CD8-positive, alpha-beta T cell (primary cell): ENCODE measurements at regions of chr7 and their contacts with region 1.

Region 1: GRCh38 chr7:155298834-155299534 is 1.3 kb downstream of the INSIG1 start:
- DNase-seq: peak; percentile 92 to 99 (median 96)
- ATAC-seq: peak; percentile 70
- H3K4me3 ChIP-seq: peak overlapping the region; percentile 57 to 67
- H3K4me3 Mint-ChIP-seq: peak overlapping the region; percentile 90
- H3K27ac ChIP-seq: peak overlapping the region; percentile 79 to 90
- H3K27ac Mint-ChIP-seq: peak overlapping the region; percentile 98
- H3K4me1 ChIP-seq: peaks cover 34% of the 10 kb centered on the region
- H3K4me1 Mint-ChIP-seq: peaks cover 42% of the 10 kb centered on the region
- H3K27me3 ChIP-seq: no peaks in the 10 kb centered on the region
- H3K27me3 Mint-ChIP-seq: no peaks in the 10 kb centered on the region
- CTCF ChIP-seq: no peak

Region 2: GRCh38 chr7:155190688-155191087 is 108.3 kb before region 1 on chr7:
- CTCF ChIA-PET with region 1: interaction called, 8 read pairs
- POLR2A ChIA-PET with region 1: no interaction called
- intact Hi-C with region 1: loop called (anchors 1 to 5 kb)
- DNase-seq: peak in 8 of 9 experiments; percentile 38 to 79 (median 62)
- ATAC-seq: peak; percentile 90
- H3K4me3 ChIP-seq: no peak overlapping the region
- H3K4me3 Mint-ChIP-seq: peak overlapping the region; percentile 22
- H3K27ac ChIP-seq: no peak overlapping the region
- H3K27ac Mint-ChIP-seq: no peak overlapping the region
- H3K4me1 ChIP-seq: peaks cover 2% of the 10 kb centered on the region
- H3K4me1 Mint-ChIP-seq: peaks cover 3% of the 10 kb centered on the region
- H3K27me3 ChIP-seq: peaks cover 0 to 2% of the 10 kb centered on the region in 2 experiments
- H3K27me3 Mint-ChIP-seq: peaks cover 14% of the 10 kb centered on the region
- CTCF ChIP-seq: peak; percentile 91

Region 3: DNA sequence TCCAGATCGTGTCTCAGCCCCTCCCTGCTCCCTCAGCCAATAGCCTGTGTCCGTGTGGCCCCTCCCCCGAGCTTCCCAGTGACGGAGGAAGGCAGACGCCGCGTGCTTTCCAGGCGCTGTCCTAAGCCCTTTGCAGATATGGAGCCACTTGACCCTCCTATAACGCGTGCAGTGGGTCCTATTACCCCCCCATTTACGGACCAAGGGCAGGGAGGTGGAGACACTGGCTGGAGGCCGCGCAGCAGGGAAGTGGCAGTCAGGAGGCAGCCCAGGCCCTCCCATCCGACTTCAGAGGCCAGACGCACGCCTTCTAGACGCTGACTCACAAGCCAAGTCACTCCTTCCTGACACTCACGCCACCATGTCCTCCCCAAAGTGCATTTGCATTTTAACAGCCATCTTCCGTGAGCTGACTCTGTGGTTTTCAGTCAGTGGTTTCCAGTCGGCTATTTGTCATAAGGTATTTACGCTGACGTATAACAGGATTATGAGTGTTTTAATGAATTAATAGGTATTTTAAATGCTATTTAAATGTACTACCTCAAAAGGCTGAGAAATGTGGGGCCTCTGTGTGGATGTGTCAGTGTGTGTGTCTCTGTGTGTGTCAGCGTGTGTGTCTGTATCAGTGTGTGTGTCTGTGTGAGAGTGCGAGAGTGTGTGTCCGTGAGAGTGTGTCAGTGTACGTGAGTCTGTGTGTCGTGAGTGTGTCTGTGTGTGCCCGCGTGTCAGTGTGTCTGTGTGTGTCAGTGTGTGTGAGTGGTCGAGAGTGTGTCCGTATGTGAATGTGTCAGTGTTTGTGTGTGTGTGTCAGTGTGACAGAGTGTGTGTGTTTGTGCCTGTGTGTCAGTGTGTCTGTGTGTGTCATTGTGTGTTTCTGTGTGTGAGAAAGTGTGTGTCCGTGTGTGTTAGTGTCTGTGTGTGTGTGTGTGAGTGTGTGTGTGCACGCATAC is 93.3 kb before region 1 on chr7:
- CTCF ChIA-PET with region 1: interaction called, 5 read pairs
- POLR2A ChIA-PET with region 1: interaction called, 49 read pairs
- intact Hi-C with region 1: loop called (anchors 1 kb)
- DNase-seq: peak; percentile 71 to 97 (median 81)
- ATAC-seq: peak; percentile 90
- H3K4me3 ChIP-seq: peak overlapping the region; percentile 59 to 65
- H3K4me3 Mint-ChIP-seq: peak overlapping the region; percentile 80
- H3K27ac ChIP-seq: peak overlapping the region; percentile 59 to 94
- H3K27ac Mint-ChIP-seq: peak overlapping the region; percentile 94
- H3K4me1 ChIP-seq: peaks cover 14% of the 10 kb centered on the region
- H3K4me1 Mint-ChIP-seq: peaks cover 22% of the 10 kb centered on the region
- H3K27me3 ChIP-seq: no peaks in the 10 kb centered on the region
- H3K27me3 Mint-ChIP-seq: no peaks in the 10 kb centered on the region
- CTCF ChIP-seq: no peak

Region 4: DNA sequence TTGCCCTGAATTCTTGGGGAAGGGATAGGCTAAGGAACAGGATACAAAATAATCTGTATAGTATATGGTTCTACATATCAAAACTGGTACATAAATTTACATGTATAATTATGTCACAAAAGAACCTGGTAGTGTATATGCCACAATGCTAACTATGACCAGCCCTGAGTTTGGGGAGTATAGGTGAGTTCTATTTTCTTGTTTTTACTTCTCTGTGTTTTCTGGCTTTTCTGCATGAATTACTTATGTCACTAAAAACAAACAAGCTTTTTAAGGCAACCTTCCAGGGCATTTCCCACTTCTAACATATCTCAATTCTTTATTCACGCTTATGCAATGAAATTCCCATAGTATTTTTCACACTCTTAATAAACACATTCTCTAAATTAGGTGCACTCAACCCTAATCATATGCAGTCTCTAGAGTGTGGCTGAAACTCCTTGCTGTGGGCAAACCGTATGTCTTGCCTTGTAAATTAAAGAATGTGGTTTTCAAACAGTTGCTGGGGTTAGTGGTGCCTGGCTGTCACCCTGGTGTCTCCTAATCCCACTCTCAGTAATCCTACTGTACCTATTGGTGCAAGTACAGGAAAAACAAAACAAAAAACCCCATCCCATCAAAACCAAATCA is 15.3 kb before region 1 on chr7:
- CTCF ChIA-PET with region 1: interaction called, 4 read pairs
- POLR2A ChIA-PET with region 1: interaction called, 11 read pairs
- intact Hi-C with region 1: no loop called
- DNase-seq: no peak
- ATAC-seq: no peak
- H3K4me3 ChIP-seq: no peak overlapping the region
- H3K4me3 Mint-ChIP-seq: no peak overlapping the region
- H3K27ac ChIP-seq: no peak overlapping the region
- H3K27ac Mint-ChIP-seq: no peak overlapping the region
- H3K4me1 ChIP-seq: peaks cover 6% of the 10 kb centered on the region
- H3K4me1 Mint-ChIP-seq: peaks cover 19% of the 10 kb centered on the region
- H3K27me3 ChIP-seq: no peaks in the 10 kb centered on the region
- H3K27me3 Mint-ChIP-seq: peaks cover 3% of the 10 kb centered on the region
- CTCF ChIP-seq: no peak

Region 5: GRCh38 chr7:155338632-155339320 is 39.8 kb after region 1 on chr7:
- CTCF ChIA-PET with region 1: interaction called, 16 read pairs
- POLR2A ChIA-PET with region 1: interaction called, 4 read pairs
- intact Hi-C with region 1: loop called (anchors 1 to 2 kb)
- DNase-seq: peak in 7 of 9 experiments; percentile 18 to 82 (median 57)
- ATAC-seq: peak; percentile 85
- H3K4me3 ChIP-seq: peak overlapping the region; percentile 21 to 27
- H3K4me3 Mint-ChIP-seq: peak overlapping the region; percentile 78
- H3K27ac ChIP-seq: no peak overlapping the region
- H3K27ac Mint-ChIP-seq: peak overlapping the region; percentile 66
- H3K4me1 ChIP-seq: peaks cover 20% of the 10 kb centered on the region
- H3K4me1 Mint-ChIP-seq: peaks cover 15% of the 10 kb centered on the region
- H3K27me3 ChIP-seq: no peaks in the 10 kb centered on the region
- H3K27me3 Mint-ChIP-seq: peaks cover 5% of the 10 kb centered on the region
- CTCF ChIP-seq: no peak

Region 6: GRCh38 chr7:155560982-155561686 is 262.1 kb after region 1 on chr7:
- CTCF ChIA-PET with region 1: no interaction called
- POLR2A ChIA-PET with region 1: no interaction called
- intact Hi-C with region 1: no loop called
- DNase-seq: no peak
- ATAC-seq: no peak
- H3K4me3 ChIP-seq: no peak overlapping the region
- H3K4me3 Mint-ChIP-seq: no peak overlapping the region
- H3K27ac ChIP-seq: no peak overlapping the region
- H3K27ac Mint-ChIP-seq: no peak overlapping the region
- H3K4me1 ChIP-seq: no peaks in the 10 kb centered on the region
- H3K4me1 Mint-ChIP-seq: no peaks in the 10 kb centered on the region
- H3K27me3 ChIP-seq: peaks cover 0 to 2% of the 10 kb centered on the region in 2 experiments
- H3K27me3 Mint-ChIP-seq: peaks cover 13% of the 10 kb centered on the region
- CTCF ChIP-seq: no peak